B cell (primary cell): ENCODE measurements at regions of chr5 and their contacts with region 1.

Region 1: GRCh38 chr5:56686337-56687195 is 128.8 kb upstream of the MAP3K1 start:
- DNase-seq: peak; percentile 82
- ATAC-seq: peak; percentile 78
- H3K4me3 ChIP-seq: peak overlapping the region in 1 of 5 experiments; percentile 33
- H3K4me3 Mint-ChIP-seq: peak overlapping the region; percentile 74
- H3K27ac ChIP-seq: peak overlapping the region; percentile 93 to 97
- H3K27ac Mint-ChIP-seq: peak overlapping the region; percentile 95
- H3K4me1 ChIP-seq: peaks cover 93% of the 10 kb centered on the region in 2 donors
- H3K4me1 Mint-ChIP-seq: peaks cover 94% of the 10 kb centered on the region
- H3K27me3 ChIP-seq: no peaks in the 10 kb centered on the region
- H3K27me3 Mint-ChIP-seq: no peaks in the 10 kb centered on the region
- CTCF ChIP-seq: no peak

Region 2: GRCh38 chr5:56588636-56589480 is 97.7 kb before region 1 on chr5:
- CTCF ChIA-PET with region 1: interaction called, 10 read pairs
- POLR2A ChIA-PET with region 1: interaction called, 25 read pairs
- intact Hi-C with region 1: loop called (anchors 1 kb)
- DNase-seq: peak; percentile 98
- ATAC-seq: peak; percentile 85
- H3K4me3 ChIP-seq: peak overlapping the region in 3 of 5 experiments; percentile 22 to 41 (median 25)
- H3K4me3 Mint-ChIP-seq: peak overlapping the region; percentile 59
- H3K27ac ChIP-seq: peak overlapping the region; percentile 99 to 100
- H3K27ac Mint-ChIP-seq: peak overlapping the region; percentile 96
- H3K4me1 ChIP-seq: peaks cover 63 to 67% of the 10 kb centered on the region in 2 donors
- H3K4me1 Mint-ChIP-seq: peaks cover 77% of the 10 kb centered on the region
- H3K27me3 ChIP-seq: no peaks in the 10 kb centered on the region
- H3K27me3 Mint-ChIP-seq: no peaks in the 10 kb centered on the region
- CTCF ChIP-seq: no peak

Region 3: GRCh38 chr5:56705217-56705616 is 18.7 kb after region 1 on chr5:
- CTCF ChIA-PET with region 1: interaction called, 5 read pairs
- POLR2A ChIA-PET with region 1: interaction called, 3 read pairs
- intact Hi-C with region 1: loop called (anchors 2 kb)
- DNase-seq: no peak
- ATAC-seq: no peak
- H3K4me3 ChIP-seq: no peak overlapping the region
- H3K4me3 Mint-ChIP-seq: no peak overlapping the region
- H3K27ac ChIP-seq: no peak overlapping the region
- H3K27ac Mint-ChIP-seq: no peak overlapping the region
- H3K4me1 ChIP-seq: peaks cover 39 to 45% of the 10 kb centered on the region in 2 donors
- H3K4me1 Mint-ChIP-seq: peaks cover 46% of the 10 kb centered on the region
- H3K27me3 ChIP-seq: no peaks in the 10 kb centered on the region
- H3K27me3 Mint-ChIP-seq: no peaks in the 10 kb centered on the region
- CTCF ChIP-seq: no peak

Region 4: DNA sequence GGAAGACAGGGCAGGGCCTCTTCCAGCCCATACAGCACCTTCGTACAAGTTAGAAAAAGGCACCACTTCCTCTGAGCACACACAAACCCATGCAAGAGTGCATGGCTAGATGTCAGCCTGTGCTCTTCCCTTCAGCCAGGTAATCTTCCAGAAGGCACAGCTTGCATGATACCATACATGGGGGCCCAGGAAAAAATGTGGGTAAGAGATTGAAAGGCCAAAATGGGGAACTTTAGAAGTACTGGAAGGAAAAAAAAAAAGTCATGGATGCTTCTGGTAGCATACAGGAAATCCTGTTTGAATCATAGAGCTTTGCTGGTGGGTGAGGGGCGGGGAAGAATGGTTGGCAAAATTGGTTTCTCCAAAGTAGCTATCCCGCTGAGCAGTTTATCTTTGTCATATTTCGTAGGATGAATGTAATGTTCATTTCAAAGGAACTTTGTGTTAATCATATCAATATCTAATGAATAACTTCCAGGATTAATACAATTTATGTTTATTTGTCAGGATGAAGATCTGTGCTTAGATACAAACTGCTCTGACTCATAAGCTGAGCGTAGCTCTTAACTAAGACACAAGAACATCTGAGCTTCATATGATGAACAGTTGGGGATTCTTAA is 50.5 kb after region 1 on chr5:
- CTCF ChIA-PET with region 1: interaction called, 7 read pairs
- POLR2A ChIA-PET with region 1: interaction called, 12 read pairs
- intact Hi-C with region 1: no loop called
- DNase-seq: peak; percentile 34
- ATAC-seq: peak; percentile 18
- H3K4me3 ChIP-seq: peak overlapping the region in 1 of 5 experiments; percentile 48
- H3K4me3 Mint-ChIP-seq: peak overlapping the region; percentile 73
- H3K27ac ChIP-seq: peak overlapping the region; percentile 79 to 91
- H3K27ac Mint-ChIP-seq: peak overlapping the region; percentile 87
- H3K4me1 ChIP-seq: peaks cover 63% of the 10 kb centered on the region in 2 donors
- H3K4me1 Mint-ChIP-seq: peaks cover 63% of the 10 kb centered on the region
- H3K27me3 ChIP-seq: no peaks in the 10 kb centered on the region
- H3K27me3 Mint-ChIP-seq: no peaks in the 10 kb centered on the region
- CTCF ChIP-seq: no peak

Region 5: GRCh38 chr5:56814963-56815658 is 128.5 kb after region 1 on chr5 and contains the start of gene MAP3K1:
- CTCF ChIA-PET with region 1: interaction called, 25 read pairs
- POLR2A ChIA-PET with region 1: interaction called, 16 read pairs
- intact Hi-C with region 1: loop called (anchors 1 kb)
- DNase-seq: peak; percentile 93
- ATAC-seq: peak; percentile 65
- H3K4me3 ChIP-seq: peak within 1 kb of the TSS; percentile 73 to 97 (median 87)
- H3K4me3 Mint-ChIP-seq: peak within 1 kb of the TSS; percentile 97
- H3K27ac ChIP-seq: peak within 1 kb of the TSS; percentile 91 to 94
- H3K27ac Mint-ChIP-seq: peak within 1 kb of the TSS; percentile 99
- H3K4me1 ChIP-seq: peaks cover 25 to 29% of the 10 kb centered on the region in 2 donors
- H3K4me1 Mint-ChIP-seq: peaks cover 44% of the 10 kb centered on the region
- H3K27me3 ChIP-seq: no peaks in the 10 kb centered on the region
- H3K27me3 Mint-ChIP-seq: no peaks in the 10 kb centered on the region
- CTCF ChIP-seq: no peak
- total RNA-seq, gene MAP3K1: 160 and 164 TPM in 2 replicates

Region 6: GRCh38 chr5:57173185-57174127 is 486.9 kb after region 1 on chr5 and contains the start of gene GPBP1:
- CTCF ChIA-PET with region 1: no interaction called
- POLR2A ChIA-PET with region 1: no interaction called
- intact Hi-C with region 1: no loop called
- DNase-seq: peak; percentile 99
- ATAC-seq: peak; percentile 76
- H3K4me3 ChIP-seq: peak within 1 kb of the TSS; percentile 87 to 100 (median 97)
- H3K4me3 Mint-ChIP-seq: peak within 1 kb of the TSS; percentile 97
- H3K27ac ChIP-seq: peak within 1 kb of the TSS; percentile 98 to 100
- H3K27ac Mint-ChIP-seq: peak within 1 kb of the TSS; percentile 98
- H3K4me1 ChIP-seq: peaks cover 42 to 46% of the 10 kb centered on the region in 2 donors
- H3K4me1 Mint-ChIP-seq: peaks cover 38% of the 10 kb centered on the region
- H3K27me3 ChIP-seq: no peaks in the 10 kb centered on the region
- H3K27me3 Mint-ChIP-seq: no peaks in the 10 kb centered on the region
- CTCF ChIP-seq: no peak
- total RNA-seq, gene GPBP1: 152 and 159 TPM in 2 replicates